Activated CD8-positive, alpha-beta T cell treated with anti-CD3 and anti-CD28 coated beads, Interleukin-2, amount 10 ng/mL, durations not matched to agents 7 days and 5 days (primary cell): ENCODE measurements at regions of chr6 and their contacts with region 1.

Region 1: DNA sequence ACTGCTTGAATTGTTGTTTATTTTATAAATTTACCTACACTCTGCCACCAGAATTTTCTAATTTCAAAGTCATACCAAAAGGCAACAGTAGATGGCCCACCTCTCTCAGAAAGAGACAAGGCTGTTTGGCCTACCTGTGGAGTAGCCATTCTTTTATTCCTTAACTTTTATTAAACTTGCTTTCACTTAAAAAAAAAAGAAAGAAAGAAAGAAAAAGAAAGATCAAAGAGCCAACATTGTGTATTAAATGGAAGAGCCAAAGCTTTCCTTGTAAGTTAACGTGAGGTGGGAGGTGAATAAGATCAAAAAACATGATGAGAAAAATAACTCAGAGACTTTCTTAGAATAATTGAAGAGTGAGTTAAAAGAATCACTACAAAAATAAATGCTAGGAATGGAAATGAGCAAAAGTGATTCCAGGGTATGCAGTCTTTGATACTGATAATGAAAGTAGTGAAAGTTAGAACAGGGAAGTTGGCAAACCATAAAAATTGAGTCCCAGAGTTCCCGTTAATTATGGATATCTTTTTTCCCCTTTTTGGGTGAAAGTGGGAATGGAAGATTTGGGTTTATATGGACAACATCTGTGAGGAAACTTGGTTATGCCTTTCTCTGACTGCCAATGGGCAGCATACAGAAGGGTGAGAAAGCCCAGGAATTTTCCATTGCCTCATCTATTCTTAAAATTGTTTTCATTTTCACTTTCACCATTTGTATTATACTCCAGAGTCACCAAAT is 35.9 kb upstream of the MYB start:
- DNase-seq: peak; percentile 49
- ATAC-seq: peak; percentile 76
- H3K4me3 Mint-ChIP-seq: peak overlapping the region; percentile 57
- H3K27ac Mint-ChIP-seq: peak overlapping the region; percentile 82
- H3K4me1 Mint-ChIP-seq: peaks cover 54% of the 10 kb centered on the region
- H3K27me3 Mint-ChIP-seq: no peaks in the 10 kb centered on the region

Region 2: GRCh38 chr6:135054569-135055498 is 90.4 kb before region 1 on chr6 and contains the start of gene HBS1L:
- CTCF ChIA-PET with region 1: interaction called, 31 read pairs
- POLR2A ChIA-PET with region 1: interaction called, 29 read pairs
- DNase-seq: peak; percentile 98
- ATAC-seq: peak; percentile 99
- H3K4me3 Mint-ChIP-seq: peak within 1 kb of the TSS; percentile 97
- H3K27ac Mint-ChIP-seq: peak within 1 kb of the TSS; percentile 98
- H3K4me1 Mint-ChIP-seq: peaks cover 31% of the 10 kb centered on the region
- H3K27me3 Mint-ChIP-seq: no peaks in the 10 kb centered on the region
- total RNA-seq, gene HBS1L: 72.8 to 77.5 TPM

Region 3: DNA sequence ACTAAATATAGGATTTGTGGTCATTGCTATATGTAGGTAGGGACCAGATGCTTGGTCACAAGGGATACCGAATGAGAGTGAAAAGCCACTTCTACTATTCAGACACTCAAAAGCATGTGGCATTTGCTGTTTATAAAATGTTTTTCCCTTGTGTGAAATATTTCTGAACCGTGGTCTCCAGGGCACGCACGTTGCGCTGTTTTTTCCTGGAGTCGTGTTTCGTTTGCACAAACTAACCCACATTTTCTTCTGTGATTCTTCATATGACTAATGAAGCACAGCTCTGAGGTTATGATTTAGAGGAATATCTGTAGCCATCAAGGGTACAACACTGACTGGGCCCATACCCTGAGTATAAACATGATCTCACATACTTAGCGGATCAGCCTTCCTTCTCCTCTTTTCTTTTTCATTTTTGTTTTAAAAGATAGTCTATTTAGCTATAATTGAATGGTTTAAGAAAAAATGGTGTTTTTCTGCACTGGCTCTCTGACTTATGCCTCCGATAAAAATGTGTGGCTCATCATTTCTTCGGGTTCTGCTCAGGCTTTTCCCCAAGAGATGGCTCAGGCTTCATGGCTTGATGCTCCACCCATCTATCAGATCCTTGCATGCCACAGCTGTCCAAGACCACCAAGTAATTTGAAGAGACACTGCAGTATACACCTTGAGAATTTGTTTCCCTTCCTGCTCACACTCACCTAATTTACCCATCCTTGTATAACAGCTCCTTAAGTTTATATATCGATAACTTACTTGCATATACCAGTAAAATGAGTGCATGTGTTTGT is 30.7 kb before region 1 on chr6:
- CTCF ChIA-PET with region 1: interaction called, 65 read pairs
- POLR2A ChIA-PET with region 1: interaction called, 6 read pairs
- DNase-seq: peak; percentile 57
- ATAC-seq: peak; percentile 79
- H3K4me3 Mint-ChIP-seq: peak overlapping the region; percentile 19
- H3K27ac Mint-ChIP-seq: peak overlapping the region; percentile 81
- H3K4me1 Mint-ChIP-seq: peaks cover 71% of the 10 kb centered on the region
- H3K27me3 Mint-ChIP-seq: no peaks in the 10 kb centered on the region

Region 4: GRCh38 chr6:135128268-135128914 is 16.8 kb before region 1 on chr6:
- CTCF ChIA-PET with region 1: interaction called, 32 read pairs
- POLR2A ChIA-PET with region 1: interaction called, 6 read pairs
- DNase-seq: peak; percentile 71
- ATAC-seq: peak; percentile 91
- H3K4me3 Mint-ChIP-seq: peak overlapping the region; percentile 49
- H3K27ac Mint-ChIP-seq: peak overlapping the region; percentile 90
- H3K4me1 Mint-ChIP-seq: peaks cover 40% of the 10 kb centered on the region
- H3K27me3 Mint-ChIP-seq: no peaks in the 10 kb centered on the region

Region 5: GRCh38 chr6:135162678-135163439 is 17.6 kb after region 1 on chr6:
- CTCF ChIA-PET with region 1: interaction called, 52 read pairs
- POLR2A ChIA-PET with region 1: interaction called, 14 read pairs
- DNase-seq: peak; percentile 55
- ATAC-seq: no peak
- H3K4me3 Mint-ChIP-seq: peak overlapping the region; percentile 17
- H3K27ac Mint-ChIP-seq: peak overlapping the region; percentile 68
- H3K4me1 Mint-ChIP-seq: peaks cover 45% of the 10 kb centered on the region
- H3K27me3 Mint-ChIP-seq: no peaks in the 10 kb centered on the region